Prostate gland (tissue), 2 donors: ENCODE measurements at regions of chr14 and their contacts with region 1.

Region 1: GRCh38 chr14:56117765-56118610 is at the start of gene PELI2:
- DNase-seq: peak; percentile 71
- H3K4me3 ChIP-seq: peak within 1 kb of the TSS; percentile 90 to 91
- H3K27ac ChIP-seq: peak within 1 kb of the TSS; percentile 90 to 94
- H3K4me1 ChIP-seq: no peaks in the 10 kb centered on the region
- H3K27me3 ChIP-seq: no peaks in the 10 kb centered on the region
- CTCF ChIP-seq: peak in 2 of 4 experiments; percentile 37 to 45
- POLR2A ChIP-seq: peak; percentile 76
- total RNA-seq, gene PELI2: 8.9 to 25.7 TPM

Region 2: GRCh38 chr14:55752586-55753390 is 365.2 kb before region 1 on chr14:
- intact Hi-C with region 1: no loop called
- DNase-seq: peak; percentile 81
- H3K4me3 ChIP-seq: no peak overlapping the region
- H3K27ac ChIP-seq: no peak overlapping the region
- H3K4me1 ChIP-seq: no peaks in the 10 kb centered on the region
- H3K27me3 ChIP-seq: no peaks in the 10 kb centered on the region
- CTCF ChIP-seq: no peak
- POLR2A ChIP-seq: no peak

Region 3: GRCh38 chr14:56195704-56196103 is 77.7 kb after region 1 on chr14:
- intact Hi-C with region 1: loop called (anchors 5 kb)
- DNase-seq: no peak
- H3K4me3 ChIP-seq: no peak overlapping the region
- H3K27ac ChIP-seq: no peak overlapping the region
- H3K4me1 ChIP-seq: no peaks in the 10 kb centered on the region
- H3K27me3 ChIP-seq: no peaks in the 10 kb centered on the region
- CTCF ChIP-seq: no peak
- POLR2A ChIP-seq: no peak

Region 4: GRCh38 chr14:56422703-56423213 is 304.8 kb after region 1 on chr14:
- intact Hi-C with region 1: no loop called
- DNase-seq: peak; percentile 93
- H3K4me3 ChIP-seq: no peak overlapping the region
- H3K27ac ChIP-seq: no peak overlapping the region
- H3K4me1 ChIP-seq: no peaks in the 10 kb centered on the region
- H3K27me3 ChIP-seq: no peaks in the 10 kb centered on the region
- CTCF ChIP-seq: peak; percentile 26 to 85 (median 74)
- POLR2A ChIP-seq: no peak